Heart left ventricle (tissue), 16 donors: ENCODE measurements at regions of chr9 and their contacts with region 1.

Region 1: DNA sequence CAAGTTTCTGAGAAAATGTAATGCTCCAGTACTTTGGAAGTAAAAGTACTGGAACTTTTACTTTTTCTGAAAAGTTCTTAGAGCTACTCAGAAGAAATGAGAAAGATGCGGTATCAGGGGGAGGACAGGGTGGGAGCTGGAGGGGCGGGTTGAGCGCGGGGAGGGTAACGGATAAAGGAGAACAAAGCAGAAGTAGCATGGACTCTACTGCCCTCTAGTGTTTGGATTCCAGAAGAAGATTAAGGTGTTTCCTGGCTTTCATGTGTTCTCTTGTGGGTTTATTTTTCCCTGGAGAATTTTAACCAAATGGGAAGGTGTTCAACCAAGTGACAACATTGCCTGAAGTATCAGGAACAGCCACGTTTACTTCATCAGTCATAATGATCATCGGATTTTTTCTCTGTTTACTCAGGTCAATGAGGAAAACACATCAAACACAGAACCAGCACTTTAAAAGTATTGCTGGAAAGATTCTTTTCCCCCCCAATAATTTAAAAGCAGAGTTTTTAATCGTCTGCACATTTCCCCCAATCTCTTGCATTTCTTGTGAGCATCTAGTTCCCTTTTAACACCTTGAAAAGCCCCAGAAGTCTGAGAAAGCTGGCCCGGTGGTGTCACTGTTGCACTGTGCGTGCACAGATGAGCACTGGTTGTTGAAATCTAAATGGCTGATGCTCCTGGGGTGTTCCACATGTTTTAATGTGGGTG is 190.6 kb downstream of the MPDZ start:
- DNase-seq: no peak
- ATAC-seq: peak in 1 of 4 donors; percentile 61
- H3K4me3 ChIP-seq: no peak overlapping the region
- H3K27ac ChIP-seq: no peak overlapping the region
- H3K4me1 ChIP-seq: peaks cover 0 to 7% (median 0%) of the 10 kb centered on the region in 12 donors
- H3K27me3 ChIP-seq: no peaks in the 10 kb centered on the region
- CTCF ChIP-seq: peak; percentile 66 to 82 (median 74)
- POLR2A ChIP-seq: no peak

Region 2: DNA sequence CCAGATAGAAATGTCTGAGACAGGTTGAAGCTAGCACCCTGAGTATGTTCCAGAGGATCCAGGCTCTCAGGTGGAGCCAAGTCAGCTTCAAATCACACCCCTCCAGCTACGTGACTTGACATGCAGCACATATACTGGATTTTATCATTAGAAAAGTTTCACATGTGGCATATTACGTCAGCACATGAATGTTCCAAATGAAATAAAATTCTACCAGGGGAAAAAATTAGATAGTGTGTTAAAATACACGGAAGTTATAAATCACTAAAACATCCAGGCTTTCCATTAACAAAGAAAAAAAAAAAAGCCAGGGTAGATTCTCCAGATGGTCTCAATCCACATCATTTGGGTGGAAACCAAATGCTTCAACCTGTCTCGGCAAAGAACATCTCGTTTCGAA is 61.0 kb before region 1 on chr9:
- intact Hi-C with region 1: loop called in 7 of 10 experiments (anchors 5 kb)
- DNase-seq: no peak
- ATAC-seq: no peak
- H3K4me3 ChIP-seq: no peak overlapping the region
- H3K27ac ChIP-seq: no peak overlapping the region
- H3K4me1 ChIP-seq: no peaks in the 10 kb centered on the region
- H3K27me3 ChIP-seq: no peaks in the 10 kb centered on the region
- CTCF ChIP-seq: no peak
- POLR2A ChIP-seq: no peak